Keratinocyte (primary cell): ENCODE measurements at regions of chr15 and their contacts with region 1.

Region 1: GRCh38 chr15:41039121-41039520 is 77.0 kb downstream of the INO80 start:
- DNase-seq: no peak
- H3K4me3 ChIP-seq: no peak overlapping the region
- H3K27ac ChIP-seq: no peak overlapping the region
- H3K4me1 ChIP-seq: no peaks in the 10 kb centered on the region
- H3K27me3 ChIP-seq: no peaks in the 10 kb centered on the region
- CTCF ChIP-seq: no peak

Region 2: DNA sequence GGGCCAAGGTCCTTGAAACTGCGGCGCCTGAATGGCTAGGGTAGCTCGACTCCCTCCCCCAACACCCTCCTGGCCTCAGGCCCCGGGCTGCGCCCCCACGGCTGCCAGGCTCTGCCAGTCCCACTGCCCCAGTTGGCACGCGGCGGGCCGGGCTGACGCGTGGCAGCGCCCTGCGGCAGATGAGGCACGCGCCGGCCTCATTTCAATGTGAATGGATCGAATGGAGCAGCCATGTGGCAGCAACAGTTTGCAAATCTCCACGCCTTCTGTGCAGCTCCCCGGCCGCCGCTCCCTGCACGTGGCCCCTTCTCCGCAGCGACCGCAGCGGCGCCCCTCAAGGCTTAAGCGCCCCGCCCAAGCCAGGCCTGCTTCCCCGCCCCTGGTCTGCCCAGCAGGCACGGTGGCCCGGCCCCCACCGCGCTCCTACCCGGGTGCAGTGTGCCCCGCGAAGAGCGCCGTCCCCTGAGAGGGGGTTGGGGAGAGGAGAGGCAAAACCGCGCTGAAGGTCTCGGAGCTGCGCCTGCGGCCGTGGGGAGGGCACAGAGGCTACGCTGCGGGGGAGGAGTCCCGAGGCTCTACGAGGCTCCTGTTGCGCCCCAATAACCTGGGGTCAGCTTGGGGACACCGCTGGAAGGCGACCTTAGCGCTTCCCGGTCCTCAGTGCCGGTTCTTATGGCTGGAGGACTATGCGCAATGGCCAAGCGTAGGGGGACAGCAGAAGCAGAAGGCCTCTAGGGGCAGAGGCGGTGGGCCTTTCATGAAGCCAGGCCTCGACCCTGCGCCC is 113.1 kb before region 1 on chr15:
- dilution Hi-C with region 1: no loop called
- DNase-seq: no peak
- H3K4me3 ChIP-seq: peak overlapping the region in 2 of 3 experiments; percentile 42 to 44
- H3K27ac ChIP-seq: no peak overlapping the region
- H3K4me1 ChIP-seq: peaks cover 19% of the 10 kb centered on the region
- H3K27me3 ChIP-seq: peaks cover 73% of the 10 kb centered on the region
- CTCF ChIP-seq: no peak

Region 3: GRCh38 chr15:41001524-41002214 is 37.5 kb before region 1 on chr15:
- dilution Hi-C with region 1: no loop called
- DNase-seq: no peak
- H3K4me3 ChIP-seq: no peak overlapping the region
- H3K27ac ChIP-seq: no peak overlapping the region
- H3K4me1 ChIP-seq: peaks cover 7% of the 10 kb centered on the region
- H3K27me3 ChIP-seq: no peaks in the 10 kb centered on the region
- CTCF ChIP-seq: no peak

Region 4: DNA sequence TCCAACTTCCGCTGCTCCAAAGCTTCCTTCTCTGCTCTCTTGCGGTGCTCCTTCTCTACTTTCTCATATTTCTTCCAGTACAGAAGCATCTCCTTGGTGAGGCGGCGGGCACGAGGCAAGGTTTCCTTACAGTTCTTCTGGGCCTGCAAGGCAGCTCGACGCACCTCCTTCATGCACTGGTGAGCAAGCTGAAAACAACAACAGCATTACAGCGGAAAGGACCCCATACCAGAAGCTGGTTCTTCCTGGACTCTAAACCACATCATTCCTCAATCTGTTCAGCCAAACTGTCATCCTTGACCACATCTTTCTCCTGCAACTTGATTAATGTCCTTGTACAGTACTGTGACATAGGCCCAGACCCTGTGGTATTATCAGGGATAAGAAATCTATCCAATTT is 40.6 kb after region 1 on chr15:
- dilution Hi-C with region 1: loop called (anchors 5 kb)
- DNase-seq: no peak
- H3K4me3 ChIP-seq: no peak overlapping the region
- H3K27ac ChIP-seq: no peak overlapping the region
- H3K4me1 ChIP-seq: no peaks in the 10 kb centered on the region
- H3K27me3 ChIP-seq: no peaks in the 10 kb centered on the region
- CTCF ChIP-seq: no peak